AG04449 (cell line): ENCODE measurements at regions of chr7 and their contacts with region 1.

Region 1: GRCh38 chr7:55255496-55256435 is 109.4 kb upstream of the LANCL2 start:
- DNase-seq: no peak
- H3K4me3 ChIP-seq: peak overlapping the region; percentile 68
- CTCF ChIP-seq: peak; percentile 96

Region 2: DNA sequence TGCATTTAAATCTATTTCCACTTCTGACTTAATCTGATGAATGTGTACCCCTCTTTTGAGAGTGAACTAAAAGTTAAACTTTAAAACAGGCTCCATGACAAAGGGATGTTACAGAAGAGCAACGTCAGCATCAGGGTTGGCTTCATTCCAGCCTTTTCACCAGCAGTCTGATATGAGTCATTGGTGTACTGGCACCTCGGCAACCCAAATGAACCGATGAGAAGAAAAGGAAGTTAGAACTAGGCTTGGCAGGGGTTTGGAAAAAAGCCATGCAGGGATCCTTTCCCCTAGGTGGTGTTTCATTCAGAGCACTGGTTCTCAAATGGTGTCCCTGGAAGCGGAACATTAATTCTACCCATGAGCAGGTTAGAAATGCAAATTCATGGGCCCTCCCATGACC is 550.3 kb before region 1 on chr7:
- CTCF ChIA-PET with region 1: no interaction called
- POLR2A ChIA-PET with region 1: no interaction called
- DNase-seq: no peak
- H3K4me3 ChIP-seq: no peak overlapping the region
- CTCF ChIP-seq: no peak

Region 3: GRCh38 chr7:54788664-54789063 is 467.1 kb before region 1 on chr7:
- CTCF ChIA-PET with region 1: interaction called, 555 read pairs
- POLR2A ChIA-PET with region 1: interaction called, 6 read pairs
- DNase-seq: peak; percentile 57
- H3K4me3 ChIP-seq: no peak overlapping the region
- CTCF ChIP-seq: peak; percentile 63

Region 4: DNA sequence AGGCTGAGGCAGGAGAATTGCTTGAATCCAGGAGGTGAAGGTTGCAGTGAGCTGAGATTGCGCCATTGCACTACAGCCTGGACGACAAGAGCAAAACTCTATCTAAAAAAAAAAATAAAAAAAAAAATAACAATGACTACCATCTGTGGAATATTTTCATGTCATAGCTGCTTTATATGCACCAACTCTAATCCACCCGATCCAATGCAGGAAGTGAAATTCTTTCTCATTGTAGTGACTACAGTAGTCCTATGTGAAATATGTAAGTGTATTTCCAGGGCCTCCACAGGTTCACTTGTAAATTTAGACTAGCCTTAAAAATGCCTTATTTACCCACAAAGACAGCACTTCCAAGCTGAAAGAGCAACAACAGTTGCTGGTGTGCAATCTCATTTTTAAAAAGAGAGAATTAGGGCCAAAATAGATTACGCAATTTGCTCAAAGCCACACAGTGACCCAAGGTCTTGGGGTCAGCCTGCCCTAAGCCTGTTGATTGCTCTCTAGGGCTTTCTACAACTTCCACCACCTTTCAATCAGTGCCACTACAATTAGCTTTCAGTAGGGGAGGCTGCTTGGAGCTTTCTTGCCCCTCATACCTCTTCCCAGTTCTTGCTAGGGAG is 262.8 kb before region 1 on chr7:
- CTCF ChIA-PET with region 1: interaction called, 14 read pairs
- POLR2A ChIA-PET with region 1: no interaction called
- DNase-seq: no peak
- H3K4me3 ChIP-seq: no peak overlapping the region
- CTCF ChIP-seq: no peak

Region 5: GRCh38 chr7:55065079-55065478 is 190.7 kb before region 1 on chr7:
- CTCF ChIA-PET with region 1: interaction called, 29 read pairs
- POLR2A ChIA-PET with region 1: interaction called, 6 read pairs
- DNase-seq: peak; percentile 97
- H3K4me3 ChIP-seq: no peak overlapping the region
- CTCF ChIP-seq: no peak

Region 6: GRCh38 chr7:55124989-55125868 is 130.5 kb before region 1 on chr7:
- CTCF ChIA-PET with region 1: interaction called, 23 read pairs
- POLR2A ChIA-PET with region 1: no interaction called
- DNase-seq: no peak
- H3K4me3 ChIP-seq: no peak overlapping the region
- CTCF ChIP-seq: no peak

Region 7: DNA sequence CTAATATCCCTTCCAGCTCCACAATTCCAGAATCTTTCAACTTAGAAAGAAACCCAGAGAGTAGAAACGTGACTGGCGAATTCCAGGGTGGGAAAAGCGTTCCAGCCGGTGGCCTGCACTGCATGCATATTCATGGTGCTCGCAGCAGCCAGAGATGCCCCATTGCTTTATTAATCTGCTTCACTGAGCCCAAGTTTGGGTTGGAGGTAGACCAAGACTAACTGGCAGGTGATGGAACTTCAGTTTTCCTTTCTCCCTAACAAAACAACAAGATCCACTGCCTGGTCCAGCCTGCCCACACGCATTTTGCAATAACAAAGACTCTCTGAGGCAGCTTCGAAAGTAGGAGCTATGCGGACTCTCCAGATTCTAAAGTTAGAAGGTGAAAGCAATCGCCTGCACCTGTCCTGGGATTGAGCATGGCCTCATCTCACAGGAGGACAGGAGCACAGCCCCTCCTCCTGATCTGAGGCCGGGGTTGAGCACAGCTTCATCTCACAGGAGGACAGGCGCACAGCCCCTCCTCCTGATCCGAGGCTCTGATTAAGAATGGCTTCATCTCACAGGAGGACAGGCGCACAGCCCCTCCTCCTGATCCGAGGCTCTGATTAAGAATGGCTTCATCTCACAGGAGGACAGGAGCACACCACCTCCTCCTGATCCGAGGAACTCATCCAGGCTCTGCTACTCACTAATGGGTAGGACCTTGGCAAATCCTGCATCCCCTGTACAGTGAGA is 18.4 kb before region 1 on chr7:
- CTCF ChIA-PET with region 1: interaction called, 56 read pairs
- POLR2A ChIA-PET with region 1: no interaction called
- DNase-seq: no peak
- H3K4me3 ChIP-seq: no peak overlapping the region
- CTCF ChIP-seq: no peak

Region 8: DNA sequence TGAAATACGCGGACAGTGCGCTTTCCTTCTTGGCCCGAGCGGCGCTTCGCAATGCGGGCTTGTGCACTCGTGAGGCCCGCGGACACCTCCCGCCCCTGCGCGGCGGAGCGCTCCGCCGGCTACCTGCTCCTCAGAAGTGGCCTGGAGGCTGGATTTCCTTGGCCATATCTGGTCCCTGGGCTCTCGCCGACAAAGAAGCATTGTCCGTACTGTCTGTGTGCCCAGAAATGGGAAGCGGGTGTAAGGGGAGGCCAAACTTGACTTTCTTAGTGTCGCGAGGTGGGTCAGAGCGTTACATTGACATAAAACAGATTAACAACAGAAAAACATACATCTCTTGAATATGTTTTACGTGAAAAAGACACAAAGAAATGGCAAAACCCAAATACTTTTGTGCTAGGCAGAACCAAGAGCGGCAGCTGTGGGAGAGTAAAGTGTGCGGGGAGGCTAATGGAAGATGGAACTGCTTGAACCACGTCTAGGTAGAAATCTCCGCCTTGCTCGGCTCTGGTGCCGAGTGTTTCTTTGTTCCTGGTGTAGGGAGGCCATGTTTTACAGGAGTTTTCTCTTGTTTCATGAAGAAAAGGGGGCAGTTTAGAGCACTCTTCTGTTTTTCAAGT is 110.8 kb after region 1 on chr7:
- CTCF ChIA-PET with region 1: no interaction called
- POLR2A ChIA-PET with region 1: no interaction called
- DNase-seq: no peak
- H3K4me3 ChIP-seq: peak overlapping the region; percentile 98
- CTCF ChIP-seq: no peak

Region 9: GRCh38 chr7:55400191-55400590 is 144.4 kb after region 1 on chr7:
- CTCF ChIA-PET with region 1: no interaction called
- POLR2A ChIA-PET with region 1: no interaction called
- DNase-seq: no peak
- H3K4me3 ChIP-seq: no peak overlapping the region
- CTCF ChIP-seq: no peak

Region 10: GRCh38 chr7:55778631-55779030 is 522.9 kb after region 1 on chr7:
- CTCF ChIA-PET with region 1: no interaction called
- POLR2A ChIA-PET with region 1: no interaction called
- DNase-seq: no peak
- H3K4me3 ChIP-seq: no peak overlapping the region
- CTCF ChIP-seq: no peak